ENCODE measurements at regions of chr3 and their contacts with region 1.

Region 1: GRCh38 chr3:196684548-196685407 is 27.3 kb downstream of the CEP19 start:
- DNase-seq: peak; percentile 29 to 78 (median 62)
- ATAC-seq: peak; percentile 78
- H3K4me3 ChIP-seq: peak overlapping the region; percentile 28
- H3K4me3 Mint-ChIP-seq: peak overlapping the region; percentile 51 to 69 (median 67)
- H3K27ac ChIP-seq: peak overlapping the region; percentile 34
- H3K27ac Mint-ChIP-seq: peak overlapping the region; percentile 38 to 80 (median 71)
- H3K4me1 ChIP-seq: peaks cover 0 to 5% of the 10 kb centered on the region in 2 donors
- H3K4me1 Mint-ChIP-seq: peaks cover 14 to 23% (median 17%) of the 10 kb centered on the region in 7 donors
- H3K27me3 ChIP-seq: no peaks in the 10 kb centered on the region
- H3K27me3 Mint-ChIP-seq: peaks cover 0 to 3% (median 0%) of the 10 kb centered on the region in 5 donors

Region 2: GRCh38 chr3:196537319-196537984 is 147.3 kb before region 1 on chr3:
- CTCF ChIA-PET with region 1: interaction called, 3 read pairs
- POLR2A ChIA-PET with region 1: no interaction called
- intact Hi-C with region 1: loop called (anchors 1 to 2 kb)
- DNase-seq: peak; percentile 19 to 60 (median 43)
- ATAC-seq: peak; percentile 46
- H3K4me3 ChIP-seq: no peak overlapping the region
- H3K4me3 Mint-ChIP-seq: no peak overlapping the region
- H3K27ac ChIP-seq: no peak overlapping the region
- H3K27ac Mint-ChIP-seq: no peak overlapping the region
- H3K4me1 ChIP-seq: no peaks in the 10 kb centered on the region
- H3K4me1 Mint-ChIP-seq: peaks cover 0 to 8% (median 0%) of the 10 kb centered on the region in 7 donors
- H3K27me3 ChIP-seq: no peaks in the 10 kb centered on the region
- H3K27me3 Mint-ChIP-seq: peaks cover 0 to 14% (median 0%) of the 10 kb centered on the region in 5 donors

Region 3: DNA sequence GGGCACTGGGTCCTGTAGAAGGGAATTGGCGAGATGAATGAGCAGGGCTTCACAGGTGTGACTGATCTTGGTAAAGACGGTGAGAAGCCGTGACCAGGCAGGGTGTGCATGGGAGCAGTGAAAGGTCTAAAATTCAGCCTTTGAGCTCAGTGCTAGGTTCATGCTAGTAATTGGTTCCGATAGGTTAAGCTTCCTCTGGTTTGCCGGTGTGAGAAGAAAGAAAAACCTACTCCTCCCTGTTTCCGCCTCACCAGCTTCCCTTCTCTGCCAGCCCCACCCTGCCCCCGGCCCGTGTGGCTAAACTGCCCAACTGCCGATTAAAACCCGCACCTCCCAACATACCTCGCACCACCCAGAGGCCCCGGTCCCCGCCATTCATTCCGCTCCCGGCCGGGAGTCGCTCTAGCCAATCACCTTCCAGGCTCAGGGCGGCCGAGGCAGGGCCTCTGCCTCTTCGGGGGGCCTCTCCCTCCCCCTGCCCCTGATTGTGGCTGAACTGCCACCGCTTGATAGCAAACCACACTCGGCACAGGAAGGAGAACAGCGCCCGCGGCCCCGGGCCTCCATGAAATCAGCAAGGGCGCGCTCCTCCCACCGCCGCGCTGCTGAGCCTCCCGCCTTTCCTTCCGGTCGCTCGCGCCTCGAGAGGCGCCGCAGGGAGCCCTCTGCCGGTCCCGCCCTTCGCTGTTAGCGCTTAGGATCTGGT is 52.6 kb before region 1 on chr3:
- CTCF ChIA-PET with region 1: interaction called, 16 read pairs
- POLR2A ChIA-PET with region 1: interaction called, 25 read pairs
- intact Hi-C with region 1: loop called (anchors 1 to 2 kb)
- DNase-seq: peak; percentile 69 to 91 (median 88)
- ATAC-seq: peak; percentile 89
- H3K4me3 ChIP-seq: peak overlapping the region; percentile 48
- H3K4me3 Mint-ChIP-seq: peak overlapping the region; percentile 80 to 96 (median 90)
- H3K27ac ChIP-seq: peak overlapping the region; percentile 78
- H3K27ac Mint-ChIP-seq: peak overlapping the region; percentile 93 to 99 (median 97)
- H3K4me1 ChIP-seq: peaks cover 30 to 31% of the 10 kb centered on the region in 2 donors
- H3K4me1 Mint-ChIP-seq: peaks cover 31 to 74% (median 62%) of the 10 kb centered on the region in 7 donors
- H3K27me3 ChIP-seq: no peaks in the 10 kb centered on the region
- H3K27me3 Mint-ChIP-seq: no peaks in the 10 kb centered on the region

Region 4: DNA sequence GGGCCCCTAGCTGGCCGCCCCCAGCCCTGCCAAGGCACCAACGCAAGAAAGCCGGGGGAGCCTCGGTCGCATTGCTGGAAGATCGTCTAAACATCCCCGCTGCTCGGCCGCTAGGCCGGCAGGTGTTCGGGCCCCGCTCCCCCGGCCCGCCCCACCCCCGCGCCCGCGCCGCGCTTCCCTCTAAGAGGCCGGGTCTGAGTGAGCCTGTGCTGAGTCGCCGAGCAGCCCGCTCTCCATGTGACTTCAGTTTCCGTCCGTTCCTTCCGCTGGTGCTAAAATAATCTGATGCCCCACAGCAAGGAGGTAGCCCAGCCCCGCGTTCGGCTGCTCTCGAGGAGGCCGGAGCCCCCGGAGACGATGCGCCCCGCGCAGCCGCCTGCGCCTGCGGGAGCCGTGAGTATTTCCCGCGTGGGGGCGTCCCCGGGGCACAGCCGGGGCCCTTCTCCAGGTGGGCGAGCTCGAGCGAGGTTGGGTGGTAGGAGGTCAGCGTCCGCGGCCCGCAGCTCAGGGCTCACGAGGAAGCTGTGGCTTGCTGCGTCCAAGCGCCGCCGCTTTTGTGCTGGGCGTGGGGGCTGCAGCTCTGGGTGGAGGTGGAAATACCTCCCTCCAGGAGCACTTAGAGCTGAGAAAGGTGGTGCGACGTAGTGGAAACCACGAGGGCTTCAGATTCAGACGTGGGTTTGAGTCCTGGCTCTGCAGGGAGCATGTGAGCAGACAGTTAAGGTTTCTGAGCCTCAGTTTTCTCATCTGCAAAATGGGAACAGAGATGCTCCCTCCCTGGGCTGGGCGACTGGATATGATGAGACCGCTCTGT is 45.1 kb before region 1 on chr3 and contains the start of gene NRROS:
- CTCF ChIA-PET with region 1: interaction called, 8 read pairs
- POLR2A ChIA-PET with region 1: interaction called, 10 read pairs
- intact Hi-C with region 1: loop called (anchors 1 to 2 kb)
- DNase-seq: peak; percentile 25 to 71 (median 46)
- ATAC-seq: peak; percentile 70
- H3K4me3 ChIP-seq: peak within 1 kb of the TSS; percentile 75
- H3K4me3 Mint-ChIP-seq: peak within 1 kb of the TSS; percentile 75 to 94 (median 92)
- H3K27ac ChIP-seq: peak within 1 kb of the TSS; percentile 79
- H3K27ac Mint-ChIP-seq: peak within 1 kb of the TSS; percentile 74 to 95 (median 92)
- H3K4me1 ChIP-seq: peaks cover 27 to 36% of the 10 kb centered on the region in 2 donors
- H3K4me1 Mint-ChIP-seq: peaks cover 49 to 92% (median 71%) of the 10 kb centered on the region in 7 donors
- H3K27me3 ChIP-seq: no peaks in the 10 kb centered on the region
- H3K27me3 Mint-ChIP-seq: no peaks in the 10 kb centered on the region
- total RNA-seq, gene NRROS: 9.8 to 53.3 (median 14.2) TPM

Region 5: GRCh38 chr3:196670339-196670738 is 14.4 kb before region 1 on chr3:
- CTCF ChIA-PET with region 1: interaction called, 10 read pairs
- POLR2A ChIA-PET with region 1: interaction called, 4 read pairs
- intact Hi-C with region 1: no loop called
- DNase-seq: no peak
- ATAC-seq: peak; percentile 31
- H3K4me3 ChIP-seq: no peak overlapping the region
- H3K4me3 Mint-ChIP-seq: peak overlapping the region; percentile 58 to 79 (median 66)
- H3K27ac ChIP-seq: peak overlapping the region; percentile 34
- H3K27ac Mint-ChIP-seq: peak overlapping the region; percentile 74 to 95 (median 85)
- H3K4me1 ChIP-seq: peaks cover 0 to 7% of the 10 kb centered on the region in 2 donors
- H3K4me1 Mint-ChIP-seq: peaks cover 13 to 41% (median 28%) of the 10 kb centered on the region in 7 donors
- H3K27me3 ChIP-seq: no peaks in the 10 kb centered on the region
- H3K27me3 Mint-ChIP-seq: no peaks in the 10 kb centered on the region

Region 6: GRCh38 chr3:196969660-196970546 is 285.1 kb after region 1 on chr3:
- CTCF ChIA-PET with region 1: no interaction called
- POLR2A ChIA-PET with region 1: no interaction called
- intact Hi-C with region 1: loop called in 1 of 2 experiments (anchors 1 kb)
- DNase-seq: peak; percentile 43 to 89 (median 66)
- ATAC-seq: peak; percentile 88
- H3K4me3 ChIP-seq: peak overlapping the region; percentile 48
- H3K4me3 Mint-ChIP-seq: peak overlapping the region; percentile 63 to 88 (median 82)
- H3K27ac ChIP-seq: no peak overlapping the region
- H3K27ac Mint-ChIP-seq: peak overlapping the region in 3 of 9 donors; percentile 32 to 53 (median 44)
- H3K4me1 ChIP-seq: no peaks in the 10 kb centered on the region
- H3K4me1 Mint-ChIP-seq: peaks cover 0 to 14% (median 6%) of the 10 kb centered on the region in 7 donors
- H3K27me3 ChIP-seq: no peaks in the 10 kb centered on the region
- H3K27me3 Mint-ChIP-seq: peaks cover 0 to 12% (median 4%) of the 10 kb centered on the region in 5 donors